Activated naive CD4-positive, alpha-beta T cell treated with anti-CD3 and anti-CD28 coated beads for 36 hours (primary cell): ENCODE measurements at regions of chr5 and their contacts with region 1.

Region 1: DNA sequence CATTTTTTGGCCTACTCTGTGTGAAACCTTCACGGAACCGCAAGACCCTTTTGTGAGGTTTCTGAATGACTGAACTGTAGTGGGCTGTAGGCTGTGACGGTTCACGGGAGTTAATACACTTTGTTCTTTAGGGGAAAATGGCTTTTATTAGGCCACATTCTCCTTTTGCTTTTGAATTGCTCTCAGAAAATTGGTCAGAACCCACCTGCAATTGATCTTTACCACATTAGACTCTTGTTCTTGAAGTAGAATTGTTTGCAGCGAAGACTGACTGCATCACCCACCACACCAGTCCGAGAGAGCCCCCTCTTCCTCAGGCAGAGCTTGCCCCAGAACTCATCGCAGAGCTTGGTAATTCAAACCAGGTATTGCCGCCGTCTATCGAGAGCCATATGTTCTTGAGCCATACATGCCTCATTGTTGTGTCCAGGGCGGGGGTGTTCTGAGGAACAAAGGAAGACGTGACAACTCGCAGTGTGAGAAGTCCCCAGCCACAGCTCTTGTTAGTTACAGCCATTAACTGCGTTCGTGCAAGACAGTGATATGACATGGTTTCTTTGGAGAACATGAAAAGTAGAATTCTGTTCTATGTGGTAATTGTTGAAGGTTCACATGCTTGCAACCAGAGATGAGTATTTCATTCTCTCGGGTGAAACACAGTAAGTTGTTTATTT is 166.4 kb upstream of the OTULINL start:
- DNase-seq: peak; percentile 43
- H3K4me3 Mint-ChIP-seq: peak overlapping the region; percentile 51
- H3K27ac Mint-ChIP-seq: peak overlapping the region; percentile 84
- H3K4me1 Mint-ChIP-seq: peaks cover 50% of the 10 kb centered on the region
- H3K27me3 Mint-ChIP-seq: peaks cover 2% of the 10 kb centered on the region

Region 2: GRCh38 chr5:14351845-14352712 is 63.1 kb before region 1 on chr5:
- CTCF ChIA-PET with region 1: no interaction called
- intact Hi-C with region 1: no loop called
- DNase-seq: peak; percentile 68
- H3K4me3 Mint-ChIP-seq: no peak overlapping the region
- H3K27ac Mint-ChIP-seq: no peak overlapping the region
- H3K4me1 Mint-ChIP-seq: no peaks in the 10 kb centered on the region
- H3K27me3 Mint-ChIP-seq: no peaks in the 10 kb centered on the region

Region 3: DNA sequence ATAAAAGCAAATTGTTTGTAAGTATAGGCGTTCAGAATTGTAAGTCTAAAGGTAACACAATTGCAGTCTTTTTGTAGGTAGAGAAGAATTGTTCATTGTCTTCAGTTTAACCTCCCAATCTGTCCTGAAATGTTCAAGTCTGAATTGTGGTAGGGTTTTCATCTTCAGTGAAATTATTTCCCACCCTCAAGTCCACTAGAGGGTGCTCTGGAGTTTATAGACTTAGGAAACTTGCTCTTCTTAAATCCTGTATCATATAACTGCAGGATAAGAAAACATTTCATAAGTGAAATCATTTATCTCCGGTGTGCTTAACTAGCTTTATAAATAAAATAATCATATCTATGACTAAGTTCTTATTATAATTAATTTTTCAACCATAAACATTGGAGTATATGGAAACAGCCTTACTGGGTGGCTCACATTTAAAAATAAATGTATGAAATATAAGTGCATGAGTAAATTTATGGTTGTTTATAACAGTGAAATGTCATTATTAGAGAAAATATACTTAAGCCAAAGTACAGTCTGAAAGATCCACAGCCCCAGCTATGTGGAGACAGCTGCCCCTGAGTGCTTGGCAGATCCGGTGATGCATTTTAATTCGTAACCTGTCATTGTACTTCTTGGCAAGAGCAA is 16.0 kb before region 1 on chr5:
- CTCF ChIA-PET with region 1: interaction called, 15 read pairs
- intact Hi-C with region 1: loop called (anchors 1 kb)
- DNase-seq: no peak
- H3K4me3 Mint-ChIP-seq: no peak overlapping the region
- H3K27ac Mint-ChIP-seq: no peak overlapping the region
- H3K4me1 Mint-ChIP-seq: peaks cover 12% of the 10 kb centered on the region
- H3K27me3 Mint-ChIP-seq: no peaks in the 10 kb centered on the region

Region 4: GRCh38 chr5:14447958-14448911 is 33.1 kb after region 1 on chr5:
- CTCF ChIA-PET with region 1: no interaction called
- intact Hi-C with region 1: no loop called
- DNase-seq: no peak
- H3K4me3 Mint-ChIP-seq: no peak overlapping the region
- H3K27ac Mint-ChIP-seq: no peak overlapping the region
- H3K4me1 Mint-ChIP-seq: peaks cover 3% of the 10 kb centered on the region
- H3K27me3 Mint-ChIP-seq: no peaks in the 10 kb centered on the region

Region 5: GRCh38 chr5:14581333-14581890 is 166.3 kb after region 1 on chr5 and contains the start of gene OTULINL:
- CTCF ChIA-PET with region 1: no interaction called
- intact Hi-C with region 1: loop called (anchors 1 kb)
- DNase-seq: peak; percentile 91
- H3K4me3 Mint-ChIP-seq: peak within 1 kb of the TSS; percentile 75
- H3K27ac Mint-ChIP-seq: peak within 1 kb of the TSS; percentile 70
- H3K4me1 Mint-ChIP-seq: peaks cover 26% of the 10 kb centered on the region
- H3K27me3 Mint-ChIP-seq: peaks cover 2% of the 10 kb centered on the region
- total RNA-seq, gene OTULINL: 9.1 to 10.6 TPM

Region 6: DNA sequence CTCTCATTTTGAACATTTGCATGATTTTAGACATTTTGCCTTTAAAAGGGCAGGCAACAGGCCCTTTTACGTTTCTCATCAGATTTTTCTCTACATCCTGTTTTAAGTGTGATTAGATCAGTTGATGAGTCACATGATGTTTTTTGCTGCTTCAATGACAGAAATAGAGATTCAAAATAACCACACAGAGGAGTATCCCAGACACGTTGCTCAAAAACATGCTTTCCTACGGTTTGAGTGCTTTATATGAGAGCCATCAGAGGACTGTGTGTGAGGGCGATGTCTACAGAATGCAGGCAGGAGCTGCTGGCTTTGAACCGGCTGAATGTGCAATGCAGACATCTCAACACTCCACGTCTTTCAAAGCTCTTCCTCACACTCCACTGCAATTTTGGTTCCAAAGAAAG is 291.5 kb after region 1 on chr5:
- CTCF ChIA-PET with region 1: no interaction called
- intact Hi-C with region 1: loop called (anchors 1 kb)
- DNase-seq: peak; percentile 46
- H3K4me3 Mint-ChIP-seq: peak overlapping the region; percentile 18
- H3K27ac Mint-ChIP-seq: peak overlapping the region; percentile 94
- H3K4me1 Mint-ChIP-seq: peaks cover 75% of the 10 kb centered on the region
- H3K27me3 Mint-ChIP-seq: no peaks in the 10 kb centered on the region

Region 7: DNA sequence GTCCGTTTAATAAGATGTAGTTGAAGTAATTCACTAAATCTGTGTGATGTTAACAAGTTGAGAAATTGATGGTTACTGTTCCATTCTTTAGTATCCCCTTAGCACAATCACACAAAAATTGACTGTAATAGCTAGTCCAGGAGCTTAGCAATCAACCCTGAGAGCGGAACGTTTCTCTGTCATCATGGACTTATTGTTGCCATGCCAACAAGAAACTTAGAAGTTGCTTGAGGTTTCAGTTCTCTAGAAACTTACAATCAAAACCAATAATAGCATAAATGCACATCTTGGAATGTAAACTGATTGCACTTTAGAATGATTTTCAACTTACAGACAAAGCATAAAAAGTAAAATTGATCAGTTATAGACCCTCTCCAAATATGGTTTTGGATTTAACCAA is 581.8 kb after region 1 on chr5:
- CTCF ChIA-PET with region 1: no interaction called
- intact Hi-C with region 1: loop called (anchors 2 kb)
- DNase-seq: no peak
- H3K4me3 Mint-ChIP-seq: no peak overlapping the region
- H3K27ac Mint-ChIP-seq: no peak overlapping the region
- H3K4me1 Mint-ChIP-seq: peaks cover 14% of the 10 kb centered on the region
- H3K27me3 Mint-ChIP-seq: no peaks in the 10 kb centered on the region